Aorta (tissue), 5 donors: ENCODE measurements at regions of chr5 and their contacts with region 1.

Region 1: GRCh38 chr5:14744296-14745187 is 80.0 kb downstream of the OTULIN start:
- DNase-seq: no peak
- ATAC-seq: no peak
- H3K4me3 ChIP-seq: no peak overlapping the region
- H3K27ac ChIP-seq: peak overlapping the region; percentile 5 to 20
- H3K4me1 ChIP-seq: peaks cover 0 to 5% of the 10 kb centered on the region in 2 donors
- H3K27me3 ChIP-seq: no peaks in the 10 kb centered on the region

Region 2: DNA sequence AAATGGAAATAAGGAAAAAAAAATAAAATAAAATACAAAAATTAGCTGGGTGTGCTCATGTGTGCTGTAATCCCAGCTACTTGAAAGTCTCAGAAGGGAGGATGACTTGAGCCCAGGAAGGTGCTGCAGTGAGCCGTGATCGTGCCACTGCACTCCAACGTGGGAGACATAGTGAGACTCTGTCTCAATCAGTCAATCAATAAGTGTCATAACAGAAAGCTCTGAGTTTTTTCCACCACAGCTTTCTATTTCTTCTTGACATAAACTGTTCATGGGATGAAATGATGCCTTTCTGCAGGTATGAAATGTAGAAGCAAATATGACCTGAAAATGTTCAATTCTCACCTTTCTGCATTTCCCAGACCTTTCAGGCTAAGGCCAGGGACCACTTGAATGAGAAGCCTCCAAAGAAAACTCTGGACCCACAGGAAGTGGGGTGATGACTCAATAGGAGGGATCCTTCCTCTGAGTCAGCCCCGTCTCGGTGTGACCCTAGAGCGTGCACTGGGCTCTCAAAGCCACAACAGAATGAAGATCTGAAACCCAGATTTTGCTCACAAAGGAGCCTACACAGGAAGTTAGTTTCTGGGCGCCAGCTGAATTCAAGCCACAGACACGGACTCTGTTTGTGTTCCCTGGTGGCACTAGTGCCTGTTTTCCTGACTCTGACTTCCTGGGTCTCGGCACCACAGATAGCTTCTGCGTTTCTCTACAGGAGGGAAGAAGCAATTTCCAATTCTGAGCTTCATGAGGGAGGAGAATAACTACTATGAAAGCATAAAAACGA is 65.0 kb after region 1 on chr5:
- intact Hi-C with region 1: loop called in 1 of 2 experiments (anchors 5 kb)
- DNase-seq: peak in 1 of 2 donors; percentile 87
- ATAC-seq: peak; percentile 80
- H3K4me3 ChIP-seq: no peak overlapping the region
- H3K27ac ChIP-seq: peak overlapping the region; percentile 26 to 61
- H3K4me1 ChIP-seq: peaks cover 1 to 7% of the 10 kb centered on the region in 2 donors
- H3K27me3 ChIP-seq: no peaks in the 10 kb centered on the region

Region 3: DNA sequence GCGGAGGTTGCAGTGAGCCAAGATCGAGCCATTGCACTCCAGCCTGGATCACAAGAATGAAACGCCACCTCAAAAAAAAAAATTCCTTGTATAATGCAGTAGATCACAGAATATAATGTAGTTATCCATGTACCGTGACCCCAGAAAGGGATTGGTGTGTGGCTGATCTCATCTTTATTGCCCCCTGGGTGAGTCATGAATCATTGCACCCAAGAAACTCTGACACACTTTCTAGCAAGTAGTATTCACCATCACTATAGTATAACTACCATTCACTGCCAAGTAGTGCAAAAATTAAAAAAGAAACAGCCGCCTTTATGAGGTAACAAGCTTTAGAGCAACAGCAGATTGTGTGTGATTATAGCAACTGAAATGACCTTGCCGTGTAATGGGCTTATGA is 150.8 kb after region 1 on chr5:
- intact Hi-C with region 1: no loop called
- DNase-seq: no peak
- ATAC-seq: no peak
- H3K4me3 ChIP-seq: no peak overlapping the region
- H3K27ac ChIP-seq: no peak overlapping the region
- H3K4me1 ChIP-seq: no peaks in the 10 kb centered on the region
- H3K27me3 ChIP-seq: no peaks in the 10 kb centered on the region